ENCODE measurements at regions of chr4 and their contacts with region 1.

Region 1: DNA sequence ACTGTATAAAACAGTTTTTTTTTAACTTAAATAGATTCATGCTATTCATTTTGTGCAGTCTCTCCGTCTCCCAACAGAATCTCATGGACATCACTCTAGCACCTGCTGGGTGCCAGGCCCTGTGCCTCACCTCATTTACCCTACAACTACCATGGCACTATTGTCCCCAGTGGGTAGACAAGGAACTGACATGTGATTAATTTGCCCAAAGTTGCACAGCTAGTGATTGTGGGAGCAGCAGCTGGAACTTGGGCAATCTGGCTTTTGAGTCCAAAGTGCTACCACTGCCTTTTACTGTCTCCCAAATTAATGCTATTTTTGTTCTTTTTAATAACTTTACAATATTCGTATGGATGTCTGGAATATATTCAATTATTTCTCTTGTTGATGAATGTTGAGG is 11.2 kb upstream of the PGRMC2 start:
- DNase-seq: no peak
- H3K4me3 ChIP-seq: no peak overlapping the region
- H3K27ac ChIP-seq: no peak overlapping the region
- H3K4me1 ChIP-seq: no peaks in the 10 kb centered on the region
- H3K27me3 ChIP-seq: no peaks in the 10 kb centered on the region
- CTCF ChIP-seq: no peak
- EP300 ChIP-seq: no peak
- POLR2A ChIP-seq: no peak
- RAD21 ChIP-seq: no peak; a peak in 1 of 4 replicates

Region 2: GRCh38 chr4:128310266-128310697 is 11.4 kb after region 1 on chr4:
- CTCF ChIA-PET with region 1: interaction called, 10 read pairs
- POLR2A ChIA-PET with region 1: no interaction called
- DNase-seq: peak in 1 of 2 experiments; percentile 51
- H3K4me3 ChIP-seq: no peak overlapping the region
- H3K27ac ChIP-seq: no peak overlapping the region
- H3K4me1 ChIP-seq: peaks cover 0 to 4% (median under 1%) of the 10 kb centered on the region in 4 experiments; a peak in 2 of 7 replicates
- H3K27me3 ChIP-seq: no peaks in the 10 kb centered on the region
- CTCF ChIP-seq: peak; percentile 38 to 55 (median 53); a peak in 3 of 4 replicates
- EP300 ChIP-seq: no peak
- POLR2A ChIP-seq: no peak
- RAD21 ChIP-seq: peak; percentile 44 to 60

Measured in H1 (cell line).